B cell (primary cell): ENCODE measurements at regions of chr10 and their contacts with region 1.

Region 1: GRCh38 chr10:88553116-88553752 is 29.9 kb downstream of the RNLS start:
- DNase-seq: peak; percentile 74
- ATAC-seq: peak; percentile 86
- H3K4me3 ChIP-seq: no peak overlapping the region
- H3K4me3 Mint-ChIP-seq: no peak overlapping the region
- H3K27ac ChIP-seq: no peak overlapping the region
- H3K27ac Mint-ChIP-seq: no peak overlapping the region
- H3K4me1 ChIP-seq: no peaks in the 10 kb centered on the region
- H3K4me1 Mint-ChIP-seq: no peaks in the 10 kb centered on the region
- H3K27me3 ChIP-seq: no peaks in the 10 kb centered on the region
- H3K27me3 Mint-ChIP-seq: no peaks in the 10 kb centered on the region
- CTCF ChIP-seq: peak; percentile 83

Region 2: GRCh38 chr10:87817609-87818504 is 735.4 kb before region 1 on chr10 and contains the start of gene ATAD1:
- CTCF ChIA-PET with region 1: interaction called, 12 read pairs
- POLR2A ChIA-PET with region 1: no interaction called
- intact Hi-C with region 1: no loop called
- DNase-seq: peak; percentile 93
- ATAC-seq: peak; percentile 81
- H3K4me3 ChIP-seq: peak within 1 kb of the TSS; percentile 84 to 93 (median 87)
- H3K4me3 Mint-ChIP-seq: peak within 1 kb of the TSS; percentile 96
- H3K27ac ChIP-seq: peak within 1 kb of the TSS; percentile 91 to 95
- H3K27ac Mint-ChIP-seq: peak within 1 kb of the TSS; percentile 97
- H3K4me1 ChIP-seq: peaks cover 15 to 25% of the 10 kb centered on the region in 2 donors
- H3K4me1 Mint-ChIP-seq: peaks cover 37% of the 10 kb centered on the region
- H3K27me3 ChIP-seq: no peaks in the 10 kb centered on the region
- H3K27me3 Mint-ChIP-seq: no peaks in the 10 kb centered on the region
- CTCF ChIP-seq: peak; percentile 16
- total RNA-seq, gene ATAD1: 41.5 and 44.9 TPM in 2 replicates

Region 3: GRCh38 chr10:87850742-87851205 is 702.5 kb before region 1 on chr10:
- CTCF ChIA-PET with region 1: interaction called, 117 read pairs
- POLR2A ChIA-PET with region 1: no interaction called
- intact Hi-C with region 1: loop called (anchors 1 kb)
- DNase-seq: peak; percentile 66
- ATAC-seq: peak; percentile 80
- H3K4me3 ChIP-seq: no peak overlapping the region
- H3K4me3 Mint-ChIP-seq: no peak overlapping the region
- H3K27ac ChIP-seq: no peak overlapping the region
- H3K27ac Mint-ChIP-seq: no peak overlapping the region
- H3K4me1 ChIP-seq: peaks cover 0 to 4% of the 10 kb centered on the region in 2 donors
- H3K4me1 Mint-ChIP-seq: peaks cover 5% of the 10 kb centered on the region
- H3K27me3 ChIP-seq: no peaks in the 10 kb centered on the region
- H3K27me3 Mint-ChIP-seq: no peaks in the 10 kb centered on the region
- CTCF ChIP-seq: peak; percentile 54

Region 4: DNA sequence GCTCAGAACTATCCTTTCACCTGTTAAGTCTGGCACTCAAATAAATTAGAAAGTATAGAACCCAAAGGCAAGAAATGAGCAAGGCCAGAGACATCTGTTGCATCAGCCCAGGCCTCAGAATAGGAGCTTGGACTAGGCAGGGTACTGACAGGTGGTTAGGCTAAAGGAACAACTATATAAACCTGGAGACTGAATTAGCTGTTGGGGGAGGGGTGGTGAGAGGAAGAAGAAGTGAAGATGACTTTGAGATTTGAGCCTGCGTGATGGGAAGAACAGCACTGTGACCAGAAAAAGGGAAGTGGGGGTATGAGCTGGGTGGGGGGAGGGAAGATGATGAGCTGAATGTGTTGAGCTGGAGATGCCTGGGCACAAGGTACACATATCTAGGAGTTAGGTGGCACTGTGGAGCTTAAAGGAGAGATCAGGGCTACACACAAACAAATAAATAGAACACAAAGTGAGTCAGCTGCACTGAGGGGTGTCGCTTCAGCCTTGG is 445.1 kb before region 1 on chr10:
- CTCF ChIA-PET with region 1: interaction called, 13 read pairs
- POLR2A ChIA-PET with region 1: no interaction called
- intact Hi-C with region 1: loop called (anchors 5 kb)
- DNase-seq: peak; percentile 94
- ATAC-seq: peak; percentile 78
- H3K4me3 ChIP-seq: peak overlapping the region in 1 of 5 experiments; percentile 22
- H3K4me3 Mint-ChIP-seq: peak overlapping the region; percentile 59
- H3K27ac ChIP-seq: peak overlapping the region; percentile 17 to 34
- H3K27ac Mint-ChIP-seq: peak overlapping the region; percentile 81
- H3K4me1 ChIP-seq: peaks cover 80 to 87% of the 10 kb centered on the region in 2 donors
- H3K4me1 Mint-ChIP-seq: peaks cover 84% of the 10 kb centered on the region
- H3K27me3 ChIP-seq: no peaks in the 10 kb centered on the region
- H3K27me3 Mint-ChIP-seq: no peaks in the 10 kb centered on the region
- CTCF ChIP-seq: no peak

Region 5: GRCh38 chr10:88392222-88392621 is 161.0 kb before region 1 on chr10:
- CTCF ChIA-PET with region 1: interaction called, 11 read pairs
- POLR2A ChIA-PET with region 1: no interaction called
- intact Hi-C with region 1: loop called (anchors 2 kb)
- DNase-seq: peak; percentile 70
- ATAC-seq: peak; percentile 86
- H3K4me3 ChIP-seq: peak overlapping the region in 1 of 5 experiments; percentile 5
- H3K4me3 Mint-ChIP-seq: peak overlapping the region; percentile 52
- H3K27ac ChIP-seq: peak overlapping the region; percentile 29 to 67
- H3K27ac Mint-ChIP-seq: peak overlapping the region; percentile 81
- H3K4me1 ChIP-seq: peaks cover 45 to 47% of the 10 kb centered on the region in 2 donors
- H3K4me1 Mint-ChIP-seq: peaks cover 14% of the 10 kb centered on the region
- H3K27me3 ChIP-seq: no peaks in the 10 kb centered on the region
- H3K27me3 Mint-ChIP-seq: no peaks in the 10 kb centered on the region
- CTCF ChIP-seq: no peak

Region 6: GRCh38 chr10:88467835-88468485 is 85.3 kb before region 1 on chr10:
- CTCF ChIA-PET with region 1: no interaction called
- POLR2A ChIA-PET with region 1: no interaction called
- intact Hi-C with region 1: no loop called
- DNase-seq: no peak
- ATAC-seq: no peak
- H3K4me3 ChIP-seq: no peak overlapping the region
- H3K4me3 Mint-ChIP-seq: no peak overlapping the region
- H3K27ac ChIP-seq: no peak overlapping the region
- H3K27ac Mint-ChIP-seq: no peak overlapping the region
- H3K4me1 ChIP-seq: no peaks in the 10 kb centered on the region
- H3K4me1 Mint-ChIP-seq: no peaks in the 10 kb centered on the region
- H3K27me3 ChIP-seq: no peaks in the 10 kb centered on the region
- H3K27me3 Mint-ChIP-seq: no peaks in the 10 kb centered on the region
- CTCF ChIP-seq: no peak

Region 7: GRCh38 chr10:88642978-88643377 is 89.7 kb after region 1 on chr10:
- CTCF ChIA-PET with region 1: no interaction called
- POLR2A ChIA-PET with region 1: no interaction called
- intact Hi-C with region 1: no loop called
- DNase-seq: no peak
- ATAC-seq: no peak
- H3K4me3 ChIP-seq: no peak overlapping the region
- H3K4me3 Mint-ChIP-seq: no peak overlapping the region
- H3K27ac ChIP-seq: no peak overlapping the region
- H3K27ac Mint-ChIP-seq: no peak overlapping the region
- H3K4me1 ChIP-seq: no peaks in the 10 kb centered on the region
- H3K4me1 Mint-ChIP-seq: no peaks in the 10 kb centered on the region
- H3K27me3 ChIP-seq: no peaks in the 10 kb centered on the region
- H3K27me3 Mint-ChIP-seq: peaks cover 19% of the 10 kb centered on the region
- CTCF ChIP-seq: no peak